RWPE1 (cell line): ENCODE measurements at regions of chr11 and their contacts with region 1.

Region 1: GRCh38 chr11:74449369-74449931 is 17.9 kb downstream of the KCNE3 start:
- DNase-seq: peak; percentile 50
- H3K27ac ChIP-seq: no peak overlapping the region
- CTCF ChIP-seq: peak; percentile 64

Region 2: GRCh38 chr11:74255741-74256369 is 193.6 kb before region 1 on chr11:
- CTCF ChIA-PET with region 1: interaction called, 25 read pairs
- POLR2A ChIA-PET with region 1: no interaction called
- DNase-seq: peak; percentile 79
- H3K27ac ChIP-seq: no peak overlapping the region
- CTCF ChIP-seq: peak; percentile 91

Region 3: DNA sequence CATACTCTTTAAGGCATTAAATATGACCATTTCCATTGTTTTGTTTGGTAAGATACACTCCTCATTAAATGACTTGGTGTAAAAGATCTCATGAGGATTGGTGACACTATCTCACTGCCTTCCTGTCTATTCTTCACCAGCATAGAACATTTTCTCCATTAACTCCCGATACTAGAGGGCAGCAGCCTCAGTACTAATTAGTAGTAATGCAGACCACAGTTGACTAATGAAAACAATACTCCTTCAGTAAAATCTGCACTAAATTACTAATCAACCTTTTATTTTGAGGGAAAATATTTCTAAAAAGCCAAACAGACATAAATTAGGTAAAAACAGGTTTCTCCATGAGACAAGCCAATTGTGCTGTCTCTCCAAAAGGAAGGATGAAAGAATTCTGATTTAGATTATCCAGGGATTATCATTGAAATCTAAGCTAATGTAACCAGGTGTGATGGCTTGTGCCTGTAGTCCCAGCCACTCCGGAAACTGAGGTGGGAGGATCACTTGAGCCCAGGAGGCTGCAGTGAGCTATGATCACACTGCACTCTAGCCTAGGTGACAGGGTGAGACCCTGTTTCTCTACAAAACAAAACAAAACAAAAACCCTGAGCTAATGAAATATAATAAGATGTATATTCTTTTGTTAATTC is 60.6 kb before region 1 on chr11:
- CTCF ChIA-PET with region 1: interaction called, 11 read pairs
- POLR2A ChIA-PET with region 1: no interaction called
- DNase-seq: peak; percentile 36
- H3K27ac ChIP-seq: no peak overlapping the region
- CTCF ChIP-seq: peak; percentile 87

Region 4: GRCh38 chr11:74462631-74463030 is 13.2 kb after region 1 on chr11:
- CTCF ChIA-PET with region 1: interaction called, 14 read pairs
- POLR2A ChIA-PET with region 1: no interaction called
- DNase-seq: no peak
- H3K27ac ChIP-seq: no peak overlapping the region
- CTCF ChIP-seq: no peak

Region 5: DNA sequence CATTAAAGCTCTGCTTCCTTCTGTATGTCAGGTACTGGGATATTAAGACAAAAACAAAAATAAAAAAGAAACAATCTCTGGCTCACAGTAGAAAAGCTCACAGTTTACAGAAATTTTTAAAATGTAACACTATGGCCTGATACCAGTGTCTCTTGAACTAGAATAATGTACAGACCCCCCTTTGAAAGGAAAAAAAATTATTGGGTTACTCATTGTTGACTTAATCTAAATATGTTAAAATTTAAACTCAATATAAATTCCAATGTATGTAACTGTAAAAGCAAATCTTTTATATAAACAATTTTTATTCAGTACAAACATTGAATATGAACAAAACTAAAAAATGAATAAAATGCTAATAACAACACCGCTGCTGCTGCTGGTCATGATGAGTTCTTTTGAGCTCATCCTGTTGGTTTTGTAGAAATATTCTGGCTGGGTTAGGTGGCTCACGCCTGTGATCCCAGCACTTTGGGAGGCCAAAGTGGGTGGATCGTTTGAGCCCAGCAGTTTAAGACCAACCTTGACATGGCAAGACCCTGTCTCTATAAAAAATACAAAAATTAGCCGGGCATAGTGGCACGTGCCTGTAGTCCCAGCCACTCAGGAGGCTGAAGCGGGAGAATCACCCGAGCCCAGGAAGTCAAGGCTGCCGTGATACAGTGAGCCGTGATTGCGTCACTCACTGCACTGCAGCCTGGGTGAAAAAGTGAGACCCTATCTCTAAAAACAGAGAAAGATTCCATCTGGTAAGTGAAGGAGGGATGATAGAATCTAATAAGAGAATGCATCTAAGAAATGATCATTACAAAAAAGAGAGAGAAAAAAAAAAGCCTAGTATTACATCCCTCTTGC is 29.7 kb after region 1 on chr11:
- CTCF ChIA-PET with region 1: no interaction called
- POLR2A ChIA-PET with region 1: no interaction called
- DNase-seq: no peak
- H3K27ac ChIP-seq: no peak overlapping the region
- CTCF ChIP-seq: no peak

Region 6: GRCh38 chr11:74506823-74507222 is 57.4 kb after region 1 on chr11:
- CTCF ChIA-PET with region 1: no interaction called
- POLR2A ChIA-PET with region 1: no interaction called
- DNase-seq: no peak
- H3K27ac ChIP-seq: no peak overlapping the region
- CTCF ChIP-seq: no peak

Region 7: DNA sequence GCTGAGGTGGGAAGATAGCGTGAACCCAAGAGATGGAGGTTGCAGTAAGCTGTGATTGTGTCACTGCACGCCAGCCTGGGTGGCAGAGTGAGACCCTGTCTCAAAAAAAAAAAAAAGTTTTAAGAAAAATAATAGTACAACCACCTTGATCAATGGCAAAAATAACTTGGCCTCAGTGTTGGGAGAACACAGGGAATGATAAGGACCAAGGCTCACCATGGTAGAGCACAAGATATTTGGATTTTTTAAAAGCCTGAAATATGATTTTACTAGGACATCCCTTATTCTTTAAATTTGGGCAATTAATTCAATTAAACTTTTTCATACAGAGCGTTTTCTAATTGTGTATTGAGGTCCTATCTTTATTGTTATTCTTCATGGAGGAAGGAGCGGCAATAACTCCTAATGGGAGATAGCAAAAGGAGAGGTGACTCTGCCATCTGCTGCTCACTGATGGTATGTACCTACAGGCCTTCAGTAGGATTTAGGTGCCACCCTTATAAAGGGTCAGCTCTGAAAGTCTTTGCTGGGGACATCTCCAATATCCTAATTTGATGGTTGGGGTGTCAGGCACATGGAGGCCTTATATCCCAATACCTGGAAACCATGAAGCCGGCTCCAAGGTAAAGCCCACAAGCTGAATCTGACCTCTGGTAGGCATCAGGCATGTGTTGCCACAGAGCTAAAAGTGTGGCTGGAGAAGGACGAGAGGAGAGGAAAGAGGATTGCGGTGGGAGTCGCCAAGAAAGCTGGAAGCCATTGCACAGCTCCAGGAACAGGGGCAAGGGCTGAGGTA is 121.0 kb after region 1 on chr11:
- CTCF ChIA-PET with region 1: interaction called, 150 read pairs
- POLR2A ChIA-PET with region 1: interaction called, 4 read pairs
- DNase-seq: peak; percentile 79
- H3K27ac ChIP-seq: no peak overlapping the region
- CTCF ChIP-seq: peak; percentile 76

Region 8: GRCh38 chr11:74611369-74611861 is 162.0 kb after region 1 on chr11:
- CTCF ChIA-PET with region 1: no interaction called
- POLR2A ChIA-PET with region 1: no interaction called
- DNase-seq: peak; percentile 11
- H3K27ac ChIP-seq: no peak overlapping the region
- CTCF ChIP-seq: peak; percentile 54